Panc1 (cell line): ENCODE measurements at regions of chr21 and their contacts with region 1.

Region 1: GRCh38 chr21:45322960-45323461 is 35.3 kb upstream of the POFUT2 start:
- DNase-seq: no peak
- ATAC-seq: peak; percentile 5
- H3K4me3 ChIP-seq: no peak overlapping the region
- H3K27ac ChIP-seq: peak overlapping the region; percentile 90
- H3K4me1 ChIP-seq: peaks cover 91% of the 10 kb centered on the region
- H3K27me3 ChIP-seq: no peaks in the 10 kb centered on the region
- CTCF ChIP-seq: no peak; the same call in 1 of the 2 replicates

Region 2: DNA sequence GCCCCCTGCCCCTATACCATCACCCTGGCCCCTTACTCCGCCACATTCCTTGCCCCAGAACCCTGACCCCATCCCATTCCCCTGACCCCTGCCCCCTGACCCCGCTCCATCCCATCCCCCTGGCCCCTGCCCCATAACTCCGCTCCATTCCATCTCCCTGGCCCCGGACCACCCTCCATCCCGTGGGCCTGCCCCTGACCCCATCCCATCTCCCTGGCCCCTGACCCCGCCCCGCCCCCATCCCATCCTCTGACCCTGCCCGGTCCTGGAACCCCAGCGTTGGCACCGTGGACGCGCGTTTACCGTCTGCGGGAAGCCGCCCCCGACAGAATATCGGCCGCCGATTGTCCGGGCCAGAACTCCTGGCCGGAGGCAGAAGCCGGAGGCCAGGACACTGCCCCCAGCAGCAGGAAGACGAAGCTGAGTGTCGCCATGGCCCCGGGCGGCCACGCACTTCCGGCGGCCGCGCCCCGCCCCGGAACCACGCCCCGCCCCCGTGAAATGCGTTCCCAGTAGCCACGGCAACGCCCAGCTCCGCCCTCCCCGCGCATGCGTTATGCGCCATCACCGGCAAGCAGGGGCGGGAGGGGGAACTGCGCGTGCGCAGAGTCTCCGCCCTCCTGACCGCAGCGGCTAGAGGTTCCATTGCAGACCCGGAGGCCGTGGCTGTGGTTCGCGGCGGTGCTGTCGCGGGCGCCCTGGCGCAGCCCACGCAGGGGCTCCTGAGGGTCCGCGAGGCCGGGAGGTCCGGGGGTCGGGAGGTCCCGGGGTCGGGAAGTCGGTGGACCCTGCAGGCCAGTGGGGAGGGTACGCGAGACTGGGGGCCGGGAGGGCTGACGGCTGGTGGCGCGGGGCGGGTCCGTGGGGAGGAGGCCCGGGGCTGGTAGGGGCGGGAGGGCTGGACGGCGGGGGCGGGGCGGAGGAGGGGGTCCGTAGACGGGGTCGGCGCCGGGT is 35.3 kb before region 1 on chr21 and contains the start of gene POFUT2:
- CTCF ChIA-PET with region 1: interaction called, 3 read pairs
- POLR2A ChIA-PET with region 1: interaction called, 13 read pairs
- in situ Hi-C with region 1: no loop called
- intact Hi-C with region 1: no loop called
- DNase-seq: no peak
- ATAC-seq: peak; percentile 83
- H3K4me3 ChIP-seq: peak within 1 kb of the TSS; percentile 52 to 58
- H3K27ac ChIP-seq: peak within 1 kb of the TSS; percentile 63
- H3K4me1 ChIP-seq: peaks cover 25% of the 10 kb centered on the region
- H3K27me3 ChIP-seq: no peaks in the 10 kb centered on the region
- CTCF ChIP-seq: no peak
- total RNA-seq, gene POFUT2: 59.6 TPM

Region 3: DNA sequence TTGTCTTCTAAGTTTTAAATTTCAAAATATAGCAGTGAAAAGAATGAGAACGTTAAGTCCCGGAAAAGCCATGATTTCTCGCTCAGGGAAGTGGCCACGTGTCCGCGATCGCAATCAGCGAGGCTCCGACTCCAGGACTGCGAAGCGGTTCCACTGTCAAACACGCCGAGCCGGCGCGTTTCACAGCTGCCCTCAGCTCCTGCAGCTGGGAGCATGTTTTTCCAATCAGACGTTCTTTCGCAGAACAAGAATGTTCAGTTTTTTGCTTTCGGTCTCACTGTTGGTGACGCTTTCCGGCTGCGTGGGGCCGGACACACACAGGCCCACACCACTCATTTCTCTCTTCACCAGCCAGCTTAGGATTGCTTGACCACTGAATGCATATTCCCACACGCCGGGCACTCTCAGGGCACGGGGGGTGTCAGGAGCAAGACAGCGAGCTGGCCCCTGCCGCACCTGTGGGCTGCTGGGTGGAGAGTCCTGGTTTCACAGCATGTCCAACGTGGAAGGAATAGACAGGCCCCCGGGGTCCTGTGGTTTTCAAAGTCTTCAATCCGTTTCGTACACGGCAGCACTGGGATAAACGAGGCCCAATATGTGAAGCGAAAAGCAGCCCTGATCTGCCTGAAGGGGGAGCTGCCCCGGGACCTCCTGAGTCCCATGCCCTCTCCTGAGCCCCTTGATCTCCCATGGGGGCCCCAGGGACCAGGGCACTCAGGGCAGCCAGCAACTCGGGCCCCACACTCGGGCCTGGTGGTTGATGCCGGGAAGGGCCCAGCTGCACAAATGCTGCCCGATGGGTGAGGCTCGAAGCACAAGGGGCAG is 34.6 kb after region 1 on chr21:
- CTCF ChIA-PET with region 1: no interaction called
- POLR2A ChIA-PET with region 1: no interaction called
- in situ Hi-C with region 1: no loop called
- intact Hi-C with region 1: no loop called
- DNase-seq: no peak
- ATAC-seq: no peak
- H3K4me3 ChIP-seq: no peak overlapping the region
- H3K27ac ChIP-seq: peak overlapping the region; percentile 66; the same call in 1 of the 2 replicates
- H3K4me1 ChIP-seq: peaks cover 40% of the 10 kb centered on the region
- H3K27me3 ChIP-seq: no peaks in the 10 kb centered on the region
- CTCF ChIP-seq: no peak; the same call in 1 of the 2 replicates